H1 (cell line): ENCODE measurements at regions of chr7 and their contacts with region 1.

Region 1: DNA sequence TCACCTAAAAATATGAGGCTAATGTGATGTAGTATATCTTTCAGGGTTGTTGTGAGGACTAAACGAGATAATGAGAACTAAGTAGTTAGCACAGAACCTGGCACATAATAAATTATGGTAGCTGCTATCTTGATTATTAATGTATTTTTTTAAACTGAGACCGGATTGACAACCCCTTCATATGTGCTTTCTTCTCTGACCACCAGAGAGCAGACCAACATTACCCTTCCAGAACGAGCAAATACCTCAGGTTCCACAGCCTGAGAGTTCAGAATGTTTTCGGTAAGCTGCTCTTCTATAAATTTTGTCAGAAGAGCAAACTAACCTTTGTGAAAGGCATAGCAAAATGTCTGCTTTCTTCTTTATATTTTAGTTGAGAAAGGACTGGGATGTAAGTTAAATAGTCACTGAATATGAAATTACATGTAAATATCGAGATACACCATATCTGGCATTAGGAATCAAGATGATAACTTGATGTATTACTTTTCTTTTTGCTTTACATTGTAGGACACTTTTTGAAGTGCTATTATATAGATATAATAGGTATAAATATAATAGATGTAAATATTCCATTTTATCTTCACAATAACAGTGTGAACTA is 13.6 kb upstream of the BPGM start:
- DNase-seq: no peak
- H3K4me3 ChIP-seq: no peak overlapping the region
- H3K27ac ChIP-seq: no peak overlapping the region
- H3K4me1 ChIP-seq: no peaks in the 10 kb centered on the region
- H3K27me3 ChIP-seq: no peaks in the 10 kb centered on the region
- CTCF ChIP-seq: peak in 2 of 3 experiments; percentile 70 to 73; a peak in 3 of 4 replicates
- EP300 ChIP-seq: no peak
- POLR2A ChIP-seq: no peak
- RAD21 ChIP-seq: peak; percentile 89 to 92

Region 2: GRCh38 chr7:134589480-134589941 is 43.5 kb before region 1 on chr7:
- CTCF ChIA-PET with region 1: no interaction called
- POLR2A ChIA-PET with region 1: no interaction called
- DNase-seq: no peak
- H3K4me3 ChIP-seq: no peak overlapping the region
- H3K27ac ChIP-seq: no peak overlapping the region
- H3K4me1 ChIP-seq: no peaks in the 10 kb centered on the region
- H3K27me3 ChIP-seq: no peaks in the 10 kb centered on the region
- CTCF ChIP-seq: no peak
- EP300 ChIP-seq: no peak
- POLR2A ChIP-seq: no peak
- RAD21 ChIP-seq: no peak

Region 3: DNA sequence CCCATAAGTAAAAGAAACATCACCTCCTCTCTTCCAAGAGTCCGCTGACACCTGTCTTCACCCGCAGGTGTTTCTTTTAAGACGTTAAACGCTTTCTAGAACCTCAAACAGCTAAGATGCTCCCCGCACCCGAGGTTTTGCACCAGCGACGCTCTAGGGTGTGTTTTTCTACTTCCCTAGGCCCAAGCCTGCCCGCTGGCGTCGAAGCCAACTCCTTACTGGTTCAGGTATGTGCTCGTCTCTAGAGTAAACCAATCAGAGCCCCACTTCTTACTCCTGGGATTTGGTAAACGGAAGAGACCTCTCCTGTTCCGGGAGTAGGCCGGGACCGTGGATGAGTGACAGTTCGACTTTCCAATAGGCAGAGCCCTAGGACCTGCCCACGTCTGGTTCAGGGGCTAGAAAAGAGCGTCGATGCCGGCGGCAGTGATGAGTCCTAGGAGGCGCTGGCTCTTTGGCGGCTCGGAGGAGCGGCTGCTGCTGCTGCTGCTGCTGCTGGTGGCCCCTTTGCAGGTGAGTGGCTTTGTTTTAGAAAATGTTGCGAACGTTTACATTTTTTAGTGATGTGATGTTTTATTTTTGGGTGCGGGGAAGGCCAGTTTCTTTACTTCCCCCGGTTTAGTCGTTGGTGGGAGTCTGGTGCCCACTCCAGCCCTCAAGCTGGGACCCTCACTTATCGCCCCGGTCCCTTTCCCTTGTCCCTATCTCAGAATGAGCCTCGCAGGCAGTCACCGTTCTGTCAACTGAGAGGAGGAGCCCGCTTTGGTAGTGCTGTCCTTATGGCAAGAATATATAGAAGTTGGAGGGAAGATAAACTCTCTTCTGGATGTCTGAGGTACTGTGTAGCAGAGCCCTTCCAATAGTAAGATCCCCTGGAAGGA is 13.6 kb after region 1 on chr7 and contains the start of gene BPGM:
- CTCF ChIA-PET with region 1: interaction called, 108 read pairs
- POLR2A ChIA-PET with region 1: interaction called, 16 read pairs
- DNase-seq: peak; percentile 94 to 99
- H3K4me3 ChIP-seq: peak within 1 kb of the TSS; percentile 72 to 91 (median 86)
- H3K27ac ChIP-seq: no peak within 1 kb of the TSS
- H3K4me1 ChIP-seq: 0 out of 7 replicates have a peak, but pooled peaks cover 0 to 3% (median under 1%) of the 10 kb centered on the region in 4 experiments
- H3K27me3 ChIP-seq: no peaks in the 10 kb centered on the region
- CTCF ChIP-seq: peak; percentile 31 to 45 (median 34); a peak in 3 of 4 replicates
- EP300 ChIP-seq: no peak
- POLR2A ChIP-seq: peak; percentile 96
- RAD21 ChIP-seq: peak in 1 of 2 experiments; percentile 16; a peak in 1 of 4 replicates
- total RNA-seq, gene BPGM: 15.3 and 17.4 TPM in 2 replicates

Region 4: DNA sequence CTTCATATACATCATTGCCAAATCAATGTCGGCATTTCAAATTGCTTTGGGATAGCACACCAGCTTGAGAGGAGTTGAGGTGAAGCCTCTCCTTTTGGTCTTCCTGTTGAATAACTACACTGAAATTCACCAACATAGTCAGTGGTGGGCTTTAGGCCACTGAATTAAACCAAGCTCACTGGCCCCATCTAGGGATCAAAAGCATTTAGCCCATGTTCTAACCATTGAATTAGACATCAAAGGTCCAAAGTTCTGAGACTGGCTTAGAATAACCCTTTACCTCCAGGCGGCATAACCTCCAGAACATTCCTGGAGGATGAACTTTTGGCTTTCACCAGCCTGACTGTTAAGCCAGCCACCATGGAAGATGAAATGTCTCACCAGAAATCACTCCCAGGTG is 68.2 kb after region 1 on chr7:
- CTCF ChIA-PET with region 1: interaction called, 82 read pairs
- POLR2A ChIA-PET with region 1: interaction called, 3 read pairs
- DNase-seq: no peak
- H3K4me3 ChIP-seq: no peak overlapping the region
- H3K27ac ChIP-seq: no peak overlapping the region
- H3K4me1 ChIP-seq: peaks cover 0 to 7% (median 4%) of the 10 kb centered on the region in 4 experiments; a peak in 3 of 7 replicates
- H3K27me3 ChIP-seq: no peaks in the 10 kb centered on the region
- CTCF ChIP-seq: peak in 2 of 3 experiments; percentile 61 to 66; a peak in 3 of 4 replicates
- EP300 ChIP-seq: no peak
- POLR2A ChIP-seq: no peak
- RAD21 ChIP-seq: peak; percentile 62 to 71

Region 5: DNA sequence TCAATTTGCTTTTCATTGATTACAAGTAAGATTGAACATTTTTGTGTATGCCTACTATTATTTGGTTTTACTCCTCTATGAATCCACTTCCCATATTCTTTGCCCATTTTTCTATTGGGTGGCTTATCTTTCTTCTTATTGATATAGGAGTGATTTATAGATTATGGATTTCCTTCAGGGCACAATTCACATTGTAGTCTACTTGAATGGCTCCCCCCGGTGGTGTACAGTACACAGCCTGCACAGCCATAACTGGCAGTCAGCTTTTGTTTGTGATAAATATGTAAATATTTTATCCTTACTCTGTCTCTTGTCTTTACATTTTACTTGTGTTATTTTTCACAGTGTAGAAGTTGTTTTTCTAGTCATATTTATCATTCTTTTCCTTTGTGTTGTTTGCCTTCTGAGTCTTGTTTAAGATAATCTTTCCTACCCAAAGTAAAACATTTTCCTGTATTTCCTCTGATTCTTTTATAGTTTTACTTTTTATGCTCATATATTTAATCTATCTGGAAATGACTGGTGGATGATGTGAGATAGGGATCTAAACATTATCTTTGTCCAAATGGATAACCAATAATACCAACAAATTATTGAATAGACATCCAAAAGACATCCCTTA is 122.5 kb after region 1 on chr7:
- CTCF ChIA-PET with region 1: interaction called, 14 read pairs
- POLR2A ChIA-PET with region 1: interaction called, 3 read pairs
- DNase-seq: no peak
- H3K4me3 ChIP-seq: no peak overlapping the region
- H3K27ac ChIP-seq: no peak overlapping the region
- H3K4me1 ChIP-seq: no peaks in the 10 kb centered on the region
- H3K27me3 ChIP-seq: no peaks in the 10 kb centered on the region
- CTCF ChIP-seq: peak; percentile 18 to 48 (median 26); a peak in 3 of 4 replicates
- EP300 ChIP-seq: no peak
- POLR2A ChIP-seq: no peak
- RAD21 ChIP-seq: peak; percentile 32 to 33

Region 6: GRCh38 chr7:134831862-134832261 is 198.8 kb after region 1 on chr7:
- CTCF ChIA-PET with region 1: no interaction called
- POLR2A ChIA-PET with region 1: no interaction called
- DNase-seq: no peak
- H3K4me3 ChIP-seq: no peak overlapping the region
- H3K27ac ChIP-seq: no peak overlapping the region
- H3K4me1 ChIP-seq: no peaks in the 10 kb centered on the region
- H3K27me3 ChIP-seq: no peaks in the 10 kb centered on the region
- CTCF ChIP-seq: no peak
- EP300 ChIP-seq: no peak
- POLR2A ChIP-seq: no peak
- RAD21 ChIP-seq: no peak